Right ventricle myocardium superior (tissue), 1 donor: ENCODE measurements at regions of chr2 and their contacts with region 1.

Region 1: GRCh38 chr2:200306196-200306930 is at the start of gene SPATS2L:
- DNase-seq: peak; percentile 88
- ATAC-seq: peak; percentile 84
- total RNA-seq, gene SPATS2L: 71.1 TPM

Region 2: GRCh38 chr2:199994371-199994770 is 312.0 kb before region 1 on chr2:
- intact Hi-C with region 1: loop called (anchors 10 kb)
- DNase-seq: no peak
- ATAC-seq: no peak

Region 3: GRCh38 chr2:200471324-200471848 is 165.0 kb after region 1 on chr2:
- intact Hi-C with region 1: loop called (anchors 10 kb)
- DNase-seq: no peak
- ATAC-seq: no peak

Region 4: GRCh38 chr2:200845669-200846325 is 539.4 kb after region 1 on chr2:
- intact Hi-C with region 1: no loop called
- DNase-seq: no peak
- ATAC-seq: no peak